Gastrocnemius medialis (tissue), 4 donors: ENCODE measurements at regions of chr1 and their contacts with region 1.

Region 1: GRCh38 chr1:162035241-162035640 is 11.6 kb upstream of the OLFML2B start:
- DNase-seq: no peak
- ATAC-seq: no peak
- H3K4me3 ChIP-seq: no peak overlapping the region
- H3K27ac ChIP-seq: no peak overlapping the region
- H3K4me1 ChIP-seq: peaks cover 4% of the 10 kb centered on the region in 2 donors
- H3K27me3 ChIP-seq: no peaks in the 10 kb centered on the region
- CTCF ChIP-seq: no peak
- POLR2A ChIP-seq: no peak

Region 2: GRCh38 chr1:161792740-161793139 is 242.5 kb before region 1 on chr1:
- in situ Hi-C with region 1: loop called (anchors 5 to 10 kb)
- intact Hi-C with region 1: loop called (anchors 1 kb)
- DNase-seq: no peak
- ATAC-seq: peak in 1 of 2 donors; percentile 41
- H3K4me3 ChIP-seq: no peak overlapping the region
- H3K27ac ChIP-seq: no peak overlapping the region
- H3K4me1 ChIP-seq: no peaks in the 10 kb centered on the region
- H3K27me3 ChIP-seq: no peaks in the 10 kb centered on the region
- CTCF ChIP-seq: peak; percentile 32 to 58 (median 47)
- POLR2A ChIP-seq: no peak